Activated CD4-positive, alpha-beta T cell treated with anti-CD3 and anti-CD28 coated beads for 36 hours (primary cell): ENCODE measurements at regions of chr10 and their contacts with region 1.

Region 1: GRCh38 chr10:110918643-110919363 is at the start of gene BBIP1:
- DNase-seq: no peak
- ATAC-seq: peak; percentile 93
- H3K4me3 Mint-ChIP-seq: peak within 1 kb of the TSS; percentile 96
- H3K27ac Mint-ChIP-seq: peak within 1 kb of the TSS; percentile 98
- H3K4me1 Mint-ChIP-seq: peaks cover 41% of the 10 kb centered on the region
- H3K27me3 Mint-ChIP-seq: no peaks in the 10 kb centered on the region
- total RNA-seq, gene BBIP1: 34.3 to 48.8 TPM

Region 2: DNA sequence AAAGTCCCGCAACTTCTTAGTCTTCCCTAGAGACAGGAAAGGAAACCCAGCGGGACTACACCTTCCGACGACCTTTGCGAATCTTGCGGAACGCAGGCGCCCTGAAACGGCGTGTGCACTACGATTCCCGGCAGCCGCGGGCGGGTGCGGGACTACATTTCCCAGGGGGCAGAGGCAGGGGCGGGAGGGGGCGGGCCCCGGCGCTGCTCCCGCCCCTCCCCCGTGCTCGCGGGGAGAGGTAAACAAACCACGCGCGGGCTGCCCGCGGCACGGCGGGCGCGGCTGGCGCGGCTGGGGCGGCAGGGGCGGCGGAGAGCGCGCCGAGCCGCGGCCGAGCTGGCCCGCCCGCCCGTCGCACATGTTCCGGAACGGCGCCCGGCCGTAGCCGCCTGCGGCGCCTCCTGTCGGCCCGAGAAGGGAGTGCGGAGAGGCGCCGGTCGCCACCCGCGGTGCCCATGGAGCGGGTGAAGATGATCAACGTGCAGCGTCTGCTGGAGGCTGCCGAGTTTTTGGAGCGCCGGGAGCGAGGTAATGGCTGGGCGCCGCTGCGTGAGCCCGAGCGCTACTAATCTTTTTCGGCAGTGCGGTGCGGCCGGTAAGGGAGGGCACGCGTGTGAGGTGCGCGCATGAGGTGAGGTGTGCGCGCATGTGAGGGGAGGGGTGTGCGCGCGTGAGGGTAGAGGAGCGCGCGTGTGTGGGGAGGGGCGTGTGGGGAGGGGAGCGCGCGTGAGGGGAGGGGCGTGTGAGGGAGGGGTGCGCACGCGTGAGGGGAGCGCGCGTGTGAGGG is 692.9 kb before region 1 on chr10:
- CTCF ChIA-PET with region 1: no interaction called
- POLR2A ChIA-PET with region 1: no interaction called
- intact Hi-C with region 1: loop called (anchors 2 kb)
- DNase-seq: peak; percentile 94
- ATAC-seq: peak; percentile 48
- H3K4me3 Mint-ChIP-seq: peak overlapping the region; percentile 95
- H3K27ac Mint-ChIP-seq: peak overlapping the region; percentile 95
- H3K4me1 Mint-ChIP-seq: peaks cover 44% of the 10 kb centered on the region
- H3K27me3 Mint-ChIP-seq: no peaks in the 10 kb centered on the region

Region 3: GRCh38 chr10:110414563-110415309 is 504.1 kb before region 1 on chr10:
- CTCF ChIA-PET with region 1: no interaction called
- POLR2A ChIA-PET with region 1: no interaction called
- intact Hi-C with region 1: loop called in 1 of 2 experiments (anchors 1 kb)
- DNase-seq: peak; percentile 93
- ATAC-seq: peak; percentile 94
- H3K4me3 Mint-ChIP-seq: peak overlapping the region; percentile 34
- H3K27ac Mint-ChIP-seq: peak overlapping the region; percentile 91
- H3K4me1 Mint-ChIP-seq: peaks cover 72% of the 10 kb centered on the region
- H3K27me3 Mint-ChIP-seq: no peaks in the 10 kb centered on the region

Region 4: GRCh38 chr10:110774069-110775019 is 144.5 kb before region 1 on chr10:
- CTCF ChIA-PET with region 1: interaction called, 7 read pairs
- POLR2A ChIA-PET with region 1: interaction called, 6 read pairs
- intact Hi-C with region 1: loop called in 1 of 2 experiments (anchors 1 kb)
- DNase-seq: peak; percentile 67
- ATAC-seq: peak; percentile 94
- H3K4me3 Mint-ChIP-seq: peak overlapping the region; percentile 18
- H3K27ac Mint-ChIP-seq: peak overlapping the region; percentile 89
- H3K4me1 Mint-ChIP-seq: peaks cover 61% of the 10 kb centered on the region
- H3K27me3 Mint-ChIP-seq: peaks cover 2% of the 10 kb centered on the region

Region 5: GRCh38 chr10:110901954-110902819 is 16.6 kb before region 1 on chr10:
- CTCF ChIA-PET with region 1: interaction called, 21 read pairs
- POLR2A ChIA-PET with region 1: interaction called, 24 read pairs
- intact Hi-C with region 1: loop called (anchors 1 to 2 kb)
- DNase-seq: peak; percentile 75
- ATAC-seq: peak; percentile 59
- H3K4me3 Mint-ChIP-seq: no peak overlapping the region
- H3K27ac Mint-ChIP-seq: peak overlapping the region; percentile 93
- H3K4me1 Mint-ChIP-seq: peaks cover 49% of the 10 kb centered on the region
- H3K27me3 Mint-ChIP-seq: no peaks in the 10 kb centered on the region

Region 6: GRCh38 chr10:110993024-110993693 is 74.4 kb after region 1 on chr10:
- CTCF ChIA-PET with region 1: interaction called, 3 read pairs
- POLR2A ChIA-PET with region 1: interaction called, 4 read pairs
- intact Hi-C with region 1: loop called (anchors 1 to 2 kb)
- DNase-seq: peak; percentile 24
- ATAC-seq: peak; percentile 97
- H3K4me3 Mint-ChIP-seq: peak overlapping the region; percentile 47
- H3K27ac Mint-ChIP-seq: peak overlapping the region; percentile 13
- H3K4me1 Mint-ChIP-seq: peaks cover 45% of the 10 kb centered on the region
- H3K27me3 Mint-ChIP-seq: no peaks in the 10 kb centered on the region

Region 7: GRCh38 chr10:111161109-111161874 is 242.5 kb after region 1 on chr10:
- CTCF ChIA-PET with region 1: no interaction called
- POLR2A ChIA-PET with region 1: no interaction called
- intact Hi-C with region 1: no loop called
- DNase-seq: no peak
- ATAC-seq: no peak
- H3K4me3 Mint-ChIP-seq: no peak overlapping the region
- H3K27ac Mint-ChIP-seq: no peak overlapping the region
- H3K4me1 Mint-ChIP-seq: no peaks in the 10 kb centered on the region
- H3K27me3 Mint-ChIP-seq: peaks cover 41% of the 10 kb centered on the region

Region 8: DNA sequence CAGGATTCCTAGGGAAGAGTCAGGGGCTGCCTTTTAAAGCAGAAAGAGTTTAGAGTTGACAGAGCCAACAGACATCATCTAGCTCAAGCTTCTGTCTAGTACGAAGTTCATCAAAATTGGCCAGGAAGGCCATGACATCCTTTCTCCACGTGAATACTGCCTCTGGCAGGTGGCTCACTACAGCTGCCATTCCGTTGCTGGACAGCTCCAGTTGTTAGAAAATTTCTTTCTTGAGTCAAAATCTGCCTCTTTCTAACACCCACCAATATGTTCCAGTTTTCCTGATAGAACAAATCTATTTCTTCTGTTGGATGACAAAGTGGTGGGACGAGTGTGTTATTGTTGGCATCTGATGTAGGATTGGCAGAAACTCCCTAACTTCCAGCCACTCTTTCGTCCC is 313.0 kb after region 1 on chr10:
- CTCF ChIA-PET with region 1: no interaction called
- POLR2A ChIA-PET with region 1: no interaction called
- intact Hi-C with region 1: no loop called
- DNase-seq: no peak
- ATAC-seq: no peak
- H3K4me3 Mint-ChIP-seq: no peak overlapping the region
- H3K27ac Mint-ChIP-seq: no peak overlapping the region
- H3K4me1 Mint-ChIP-seq: no peaks in the 10 kb centered on the region
- H3K27me3 Mint-ChIP-seq: peaks cover 26% of the 10 kb centered on the region

Region 9: DNA sequence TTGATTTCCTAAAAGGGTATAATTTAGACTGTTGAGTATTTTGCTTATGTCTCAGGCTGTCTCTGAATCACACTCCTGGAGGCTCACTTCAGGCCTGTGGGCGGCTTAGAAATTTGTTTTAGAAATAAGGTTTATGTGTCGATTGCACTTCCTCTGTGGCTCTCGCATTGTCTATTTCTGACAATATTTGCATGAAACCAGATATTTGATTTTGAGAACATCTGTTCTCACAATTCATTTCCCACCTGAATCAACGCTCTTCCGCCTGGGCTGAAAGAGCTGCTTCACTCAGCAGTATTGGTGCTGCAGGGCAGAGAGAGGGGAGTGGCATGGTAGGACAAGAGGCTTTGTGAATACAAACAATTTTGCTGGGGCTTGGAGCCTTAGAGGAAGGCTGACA is 420.0 kb after region 1 on chr10:
- CTCF ChIA-PET with region 1: no interaction called
- POLR2A ChIA-PET with region 1: no interaction called
- intact Hi-C with region 1: no loop called
- DNase-seq: no peak
- ATAC-seq: no peak
- H3K4me3 Mint-ChIP-seq: no peak overlapping the region
- H3K27ac Mint-ChIP-seq: no peak overlapping the region
- H3K4me1 Mint-ChIP-seq: no peaks in the 10 kb centered on the region
- H3K27me3 Mint-ChIP-seq: peaks cover 5% of the 10 kb centered on the region